Activated naive CD4-positive, alpha-beta T cell treated with anti-CD3 and anti-CD28 coated beads for 36 hours (primary cell): ENCODE measurements at regions of chr4 and their contacts with region 1.

Region 1: DNA sequence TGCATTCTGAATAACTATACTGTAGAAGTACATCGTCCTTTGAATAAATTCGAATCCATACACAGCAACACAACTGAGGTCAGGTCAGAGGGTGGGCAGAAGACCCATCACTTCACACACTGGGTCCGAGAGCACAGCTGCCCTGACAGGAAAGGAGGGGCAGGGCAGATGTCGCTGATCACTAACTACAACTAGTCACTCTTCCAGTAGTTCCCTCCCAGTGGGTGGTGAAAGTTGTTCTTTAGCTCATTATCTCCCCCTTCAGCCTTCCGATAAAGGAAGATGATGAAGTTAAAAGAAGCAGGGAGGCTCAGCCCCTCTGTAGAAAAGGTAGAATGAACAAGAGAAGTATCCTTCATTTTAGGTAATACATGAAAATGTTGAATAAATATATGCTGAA is 278.9 kb downstream of the INPP4B start:
- DNase-seq: peak; percentile 77
- H3K4me3 Mint-ChIP-seq: peak overlapping the region; percentile 77
- H3K27ac Mint-ChIP-seq: peak overlapping the region; percentile 94
- H3K4me1 Mint-ChIP-seq: peaks cover 48% of the 10 kb centered on the region
- H3K27me3 Mint-ChIP-seq: no peaks in the 10 kb centered on the region

Region 2: GRCh38 chr4:142126890-142127497 is 440.2 kb before region 1 on chr4:
- CTCF ChIA-PET with region 1: interaction called, 3 read pairs
- intact Hi-C with region 1: loop called (anchors 5 kb)
- DNase-seq: peak; percentile 81
- H3K4me3 Mint-ChIP-seq: no peak overlapping the region
- H3K27ac Mint-ChIP-seq: no peak overlapping the region
- H3K4me1 Mint-ChIP-seq: peaks cover 37% of the 10 kb centered on the region
- H3K27me3 Mint-ChIP-seq: no peaks in the 10 kb centered on the region

Region 3: DNA sequence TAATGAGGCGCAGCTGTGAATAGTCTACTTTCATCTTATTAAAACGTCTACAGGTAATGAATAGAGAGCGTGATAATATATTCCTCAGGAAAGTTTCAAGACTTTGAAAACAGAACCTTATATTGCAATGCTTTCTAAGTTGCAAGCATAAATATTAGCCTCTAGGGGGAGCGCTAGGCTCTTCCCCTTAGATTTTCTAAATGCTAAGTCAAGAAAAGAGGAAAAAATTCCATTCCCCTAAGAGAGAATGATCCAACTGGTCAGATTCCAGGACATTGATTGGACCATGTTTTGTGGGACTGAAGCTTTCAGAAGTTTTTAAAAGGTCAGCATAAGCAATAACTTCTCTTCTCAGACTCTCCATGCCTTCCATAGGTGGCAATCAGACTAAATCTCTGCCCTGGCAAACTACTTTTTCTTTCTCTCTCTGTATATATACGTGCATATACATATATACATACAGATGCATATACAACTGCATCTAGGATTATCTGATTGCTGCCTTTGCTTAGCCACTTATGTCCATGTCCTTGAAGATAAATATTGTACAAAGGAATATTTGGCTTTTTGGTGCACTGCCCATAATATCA is 214.0 kb before region 1 on chr4:
- CTCF ChIA-PET with region 1: interaction called, 11 read pairs
- intact Hi-C with region 1: loop called (anchors 1 kb)
- DNase-seq: no peak
- H3K4me3 Mint-ChIP-seq: peak overlapping the region; percentile 48
- H3K27ac Mint-ChIP-seq: peak overlapping the region; percentile 90
- H3K4me1 Mint-ChIP-seq: peaks cover 94% of the 10 kb centered on the region
- H3K27me3 Mint-ChIP-seq: no peaks in the 10 kb centered on the region

Region 4: DNA sequence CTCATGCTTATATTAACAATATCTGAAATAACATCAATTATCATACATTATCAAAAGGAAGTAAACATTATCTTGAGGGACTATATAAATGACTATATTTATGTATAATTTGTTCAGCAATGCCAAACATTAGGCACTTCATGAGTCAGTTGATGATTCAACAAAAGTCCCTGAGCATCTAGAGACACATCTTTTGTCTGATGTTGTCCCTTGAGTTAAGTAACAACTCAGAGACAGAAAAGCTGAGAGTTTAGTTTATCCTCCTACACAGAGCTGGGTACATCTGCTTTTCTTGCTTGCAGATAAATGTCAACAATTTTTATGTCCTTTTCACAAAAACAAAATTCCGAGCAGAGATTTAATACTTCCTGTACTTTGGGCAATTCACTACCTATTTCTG is 32.2 kb before region 1 on chr4:
- CTCF ChIA-PET with region 1: interaction called, 3 read pairs
- intact Hi-C with region 1: loop called (anchors 2 kb)
- DNase-seq: no peak
- H3K4me3 Mint-ChIP-seq: no peak overlapping the region
- H3K27ac Mint-ChIP-seq: no peak overlapping the region
- H3K4me1 Mint-ChIP-seq: peaks cover 48% of the 10 kb centered on the region
- H3K27me3 Mint-ChIP-seq: no peaks in the 10 kb centered on the region

Region 5: GRCh38 chr4:142713282-142714030 is 146.3 kb after region 1 on chr4:
- CTCF ChIA-PET with region 1: no interaction called
- intact Hi-C with region 1: loop called (anchors 1 kb)
- DNase-seq: no peak
- H3K4me3 Mint-ChIP-seq: peak overlapping the region; percentile 9
- H3K27ac Mint-ChIP-seq: peak overlapping the region; percentile 92
- H3K4me1 Mint-ChIP-seq: peaks cover 76% of the 10 kb centered on the region
- H3K27me3 Mint-ChIP-seq: no peaks in the 10 kb centered on the region

Region 6: DNA sequence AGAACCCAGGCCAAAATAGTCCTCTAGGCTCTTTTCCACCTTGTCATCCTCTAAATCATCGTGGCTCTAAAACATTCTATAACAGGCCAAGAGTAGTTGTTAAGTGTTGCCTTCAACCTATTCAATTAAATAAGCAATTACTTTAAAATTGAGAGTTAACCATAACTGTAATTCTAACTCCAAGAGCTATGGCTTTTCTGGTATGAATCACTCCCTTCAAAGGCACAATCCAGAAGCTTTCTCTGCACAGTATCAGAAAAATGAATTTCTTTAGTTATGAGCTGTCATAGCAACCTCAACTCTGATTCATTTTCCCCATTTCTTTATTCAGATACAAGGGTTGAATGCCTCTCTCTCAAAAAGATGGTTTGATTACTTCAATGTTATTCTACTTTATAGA is 257.2 kb after region 1 on chr4:
- CTCF ChIA-PET with region 1: interaction called, 4 read pairs
- intact Hi-C with region 1: loop called (anchors 1 kb)
- DNase-seq: no peak
- H3K4me3 Mint-ChIP-seq: peak overlapping the region; percentile 5
- H3K27ac Mint-ChIP-seq: peak overlapping the region; percentile 86
- H3K4me1 Mint-ChIP-seq: peaks cover 18% of the 10 kb centered on the region
- H3K27me3 Mint-ChIP-seq: no peaks in the 10 kb centered on the region